ENCODE measurements at regions of chr14 and their contacts with region 1.

Region 1: DNA sequence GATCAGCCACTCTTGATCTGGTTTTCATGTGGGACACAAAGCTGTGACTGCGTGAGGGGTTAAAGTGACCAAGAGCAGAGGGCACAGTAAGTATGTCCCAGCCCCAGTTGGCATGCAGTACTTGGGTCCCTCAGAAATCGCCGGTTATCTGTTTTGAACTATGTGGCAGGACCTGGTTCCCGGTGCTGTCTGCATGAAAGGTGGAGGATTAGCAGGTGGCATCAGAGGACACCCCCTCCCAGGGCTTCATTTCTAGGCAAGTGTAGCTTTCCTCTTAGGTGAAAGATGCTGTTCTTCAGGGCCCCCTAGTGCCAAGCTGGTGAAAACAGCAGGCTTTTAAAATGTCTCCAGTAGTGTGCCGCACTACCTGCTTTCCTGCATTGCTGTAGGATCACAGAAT is 57.1 kb downstream of the ATG14 start:
- DNase-seq: peak in 2 of 3 donors; percentile 54 to 78
- ATAC-seq: peak; percentile 79
- H3K4me3 ChIP-seq: no peak overlapping the region
- H3K4me1 ChIP-seq: peaks cover 7% of the 10 kb centered on the region
- CTCF ChIP-seq: peak; percentile 42

Region 2: DNA sequence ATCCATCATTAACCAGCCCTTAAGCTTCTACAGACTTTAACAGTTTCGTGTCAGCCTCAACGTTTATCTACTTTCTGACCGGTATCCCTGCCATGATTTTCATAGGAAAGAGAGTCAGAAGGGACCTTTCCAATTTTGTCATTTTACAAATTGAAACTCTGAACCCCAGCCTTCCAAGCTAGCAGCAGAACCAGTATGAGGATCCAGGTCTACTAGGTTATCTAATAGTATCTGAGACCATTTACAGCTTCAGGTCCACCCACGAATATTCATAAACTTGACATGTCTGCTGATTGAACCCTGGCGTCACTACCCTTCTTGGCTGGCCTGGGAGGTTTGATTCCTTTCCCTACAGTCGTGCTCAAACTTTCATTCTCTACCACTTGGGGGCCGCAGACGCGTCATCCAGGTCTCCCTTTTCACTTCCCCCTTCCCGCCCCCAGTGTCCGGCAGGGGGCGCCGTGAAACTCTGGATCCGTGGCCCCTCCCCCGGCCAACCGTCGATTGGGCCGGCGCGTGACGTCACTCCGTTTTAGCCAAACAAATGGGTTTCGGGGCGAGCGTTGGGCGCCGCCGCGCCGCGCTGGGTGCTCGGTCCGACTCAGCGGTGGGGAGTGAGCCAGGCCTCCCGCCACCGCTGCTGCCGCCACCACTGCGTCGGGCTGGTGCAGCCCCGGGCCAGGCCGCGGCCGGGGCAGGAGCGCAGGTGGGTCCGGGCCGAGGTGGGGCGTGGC is 83.5 kb before region 1 on chr14 and contains the start of gene FBXO34:
- intact Hi-C with region 1: loop called in 1 of 2 experiments (anchors 10 kb)
- DNase-seq: peak; percentile 98 to 100 (median 100)
- ATAC-seq: peak; percentile 97
- H3K4me3 ChIP-seq: peak within 1 kb of the TSS; percentile 89
- H3K4me1 ChIP-seq: peaks cover 18% of the 10 kb centered on the region
- CTCF ChIP-seq: peak; percentile 99
- total RNA-seq, gene FBXO34: 42.2 to 76.9 (median 59.1) TPM

Measured in mucosa of descending colon (tissue), 3 donors.